B cell (primary cell): ENCODE measurements at regions of chr22 and their contacts with region 1.

Region 1: GRCh38 chr22:45863981-45864751 is 112.8 kb downstream of the WNT7B start:
- DNase-seq: peak; percentile 73
- ATAC-seq: peak; percentile 94
- H3K4me3 ChIP-seq: no peak overlapping the region
- H3K4me3 Mint-ChIP-seq: no peak overlapping the region
- H3K27ac ChIP-seq: no peak overlapping the region
- H3K27ac Mint-ChIP-seq: no peak overlapping the region
- H3K4me1 ChIP-seq: no peaks in the 10 kb centered on the region
- H3K4me1 Mint-ChIP-seq: peaks cover 9% of the 10 kb centered on the region
- H3K27me3 ChIP-seq: peaks cover 0 to 29% (median 16%) of the 10 kb centered on the region in 4 experiments
- H3K27me3 Mint-ChIP-seq: peaks cover 32% of the 10 kb centered on the region
- CTCF ChIP-seq: peak; percentile 99

Region 2: GRCh38 chr22:45645526-45646414 is 218.4 kb before region 1 on chr22:
- CTCF ChIA-PET with region 1: interaction called, 25 read pairs
- POLR2A ChIA-PET with region 1: no interaction called
- intact Hi-C with region 1: loop called (anchors 1 kb)
- DNase-seq: peak; percentile 80
- ATAC-seq: peak; percentile 95
- H3K4me3 ChIP-seq: no peak overlapping the region
- H3K4me3 Mint-ChIP-seq: no peak overlapping the region
- H3K27ac ChIP-seq: no peak overlapping the region
- H3K27ac Mint-ChIP-seq: no peak overlapping the region
- H3K4me1 ChIP-seq: peaks cover 7 to 8% of the 10 kb centered on the region in 2 donors
- H3K4me1 Mint-ChIP-seq: peaks cover 6% of the 10 kb centered on the region
- H3K27me3 ChIP-seq: peaks cover 0 to 30% (median 8%) of the 10 kb centered on the region in 4 experiments
- H3K27me3 Mint-ChIP-seq: peaks cover 54% of the 10 kb centered on the region
- CTCF ChIP-seq: peak; percentile 98

Region 3: GRCh38 chr22:45731798-45732495 is 132.2 kb before region 1 on chr22:
- CTCF ChIA-PET with region 1: interaction called, 13 read pairs
- POLR2A ChIA-PET with region 1: no interaction called
- intact Hi-C with region 1: no loop called
- DNase-seq: no peak
- ATAC-seq: no peak
- H3K4me3 ChIP-seq: no peak overlapping the region
- H3K4me3 Mint-ChIP-seq: no peak overlapping the region
- H3K27ac ChIP-seq: no peak overlapping the region
- H3K27ac Mint-ChIP-seq: no peak overlapping the region
- H3K4me1 ChIP-seq: no peaks in the 10 kb centered on the region
- H3K4me1 Mint-ChIP-seq: peaks cover 4% of the 10 kb centered on the region
- H3K27me3 ChIP-seq: no peaks in the 10 kb centered on the region
- H3K27me3 Mint-ChIP-seq: no peaks in the 10 kb centered on the region
- CTCF ChIP-seq: no peak

Region 4: GRCh38 chr22:45846952-45847351 is 17.2 kb before region 1 on chr22:
- CTCF ChIA-PET with region 1: interaction called, 45 read pairs
- POLR2A ChIA-PET with region 1: no interaction called
- intact Hi-C with region 1: no loop called
- DNase-seq: no peak
- ATAC-seq: no peak
- H3K4me3 ChIP-seq: no peak overlapping the region
- H3K4me3 Mint-ChIP-seq: no peak overlapping the region
- H3K27ac ChIP-seq: no peak overlapping the region
- H3K27ac Mint-ChIP-seq: no peak overlapping the region
- H3K4me1 ChIP-seq: no peaks in the 10 kb centered on the region
- H3K4me1 Mint-ChIP-seq: peaks cover 3% of the 10 kb centered on the region
- H3K27me3 ChIP-seq: no peaks in the 10 kb centered on the region
- H3K27me3 Mint-ChIP-seq: no peaks in the 10 kb centered on the region
- CTCF ChIP-seq: no peak

Region 5: GRCh38 chr22:45876136-45877035 is 12.2 kb after region 1 on chr22:
- CTCF ChIA-PET with region 1: interaction called, 31 read pairs
- POLR2A ChIA-PET with region 1: no interaction called
- intact Hi-C with region 1: no loop called
- DNase-seq: no peak
- ATAC-seq: no peak
- H3K4me3 ChIP-seq: no peak overlapping the region
- H3K4me3 Mint-ChIP-seq: no peak overlapping the region
- H3K27ac ChIP-seq: no peak overlapping the region
- H3K27ac Mint-ChIP-seq: no peak overlapping the region
- H3K4me1 ChIP-seq: peaks cover 0 to 6% of the 10 kb centered on the region in 2 donors
- H3K4me1 Mint-ChIP-seq: peaks cover 1% of the 10 kb centered on the region
- H3K27me3 ChIP-seq: peaks cover 0 to 35% (median 5%) of the 10 kb centered on the region in 4 experiments
- H3K27me3 Mint-ChIP-seq: peaks cover 20% of the 10 kb centered on the region
- CTCF ChIP-seq: no peak

Region 6: GRCh38 chr22:45934659-45935341 is 70.6 kb after region 1 on chr22:
- CTCF ChIA-PET with region 1: no interaction called
- POLR2A ChIA-PET with region 1: no interaction called
- intact Hi-C with region 1: no loop called
- DNase-seq: no peak
- ATAC-seq: no peak
- H3K4me3 ChIP-seq: no peak overlapping the region
- H3K4me3 Mint-ChIP-seq: no peak overlapping the region
- H3K27ac ChIP-seq: no peak overlapping the region
- H3K27ac Mint-ChIP-seq: no peak overlapping the region
- H3K4me1 ChIP-seq: no peaks in the 10 kb centered on the region
- H3K4me1 Mint-ChIP-seq: no peaks in the 10 kb centered on the region
- H3K27me3 ChIP-seq: peaks cover 0 to 23% (median 0%) of the 10 kb centered on the region in 4 experiments
- H3K27me3 Mint-ChIP-seq: peaks cover 31% of the 10 kb centered on the region
- CTCF ChIP-seq: no peak

Region 7: DNA sequence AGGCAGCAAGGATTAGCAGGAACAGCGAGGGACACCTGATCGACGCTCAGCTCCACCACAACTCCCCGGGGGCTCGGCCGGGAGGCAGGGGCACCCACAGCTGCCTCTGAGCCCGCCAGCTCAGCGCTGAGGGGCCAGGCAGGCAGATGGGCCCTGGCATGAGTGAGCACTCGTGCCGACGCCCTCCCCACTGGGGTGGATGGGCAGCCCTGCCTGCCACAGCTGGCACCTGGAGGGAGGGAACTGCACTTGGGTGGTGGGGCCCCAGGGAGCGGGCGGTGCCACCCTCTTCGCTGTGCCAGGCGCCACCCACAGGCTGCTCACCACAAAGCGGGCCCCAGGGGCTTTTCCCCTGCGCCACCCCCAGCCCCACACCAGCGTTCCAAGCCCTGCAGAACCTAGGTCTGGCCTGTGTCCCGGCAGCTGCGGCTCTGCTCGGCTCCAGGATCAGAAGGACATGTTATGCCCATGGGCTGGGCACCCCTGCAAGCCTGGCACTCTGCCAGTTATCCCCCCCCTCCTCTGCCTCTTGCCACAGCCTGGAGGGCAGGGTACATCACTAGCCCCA is 84.0 kb after region 1 on chr22:
- CTCF ChIA-PET with region 1: interaction called, 16 read pairs
- POLR2A ChIA-PET with region 1: no interaction called
- intact Hi-C with region 1: no loop called
- DNase-seq: peak; percentile 79
- ATAC-seq: peak; percentile 90
- H3K4me3 ChIP-seq: peak overlapping the region in 1 of 5 experiments; percentile 17
- H3K4me3 Mint-ChIP-seq: peak overlapping the region; percentile 69
- H3K27ac ChIP-seq: no peak overlapping the region
- H3K27ac Mint-ChIP-seq: peak overlapping the region; percentile 41
- H3K4me1 ChIP-seq: peaks cover 20 to 31% of the 10 kb centered on the region in 2 donors
- H3K4me1 Mint-ChIP-seq: peaks cover 38% of the 10 kb centered on the region
- H3K27me3 ChIP-seq: peaks cover 0 to 11% (median 2%) of the 10 kb centered on the region in 4 experiments
- H3K27me3 Mint-ChIP-seq: peaks cover 4% of the 10 kb centered on the region
- CTCF ChIP-seq: no peak